IMR-90 (cell line): ENCODE measurements at regions of chr18 and their contacts with region 1.

Region 1: GRCh38 chr18:46849007-46849406 is 68.3 kb downstream of the PIAS2 start:
- DNase-seq: no peak
- ATAC-seq: no peak
- H3K4me3 ChIP-seq: no peak overlapping the region
- H3K27ac ChIP-seq: no peak overlapping the region
- H3K4me1 ChIP-seq: no peaks in the 10 kb centered on the region
- H3K27me3 ChIP-seq: no peaks in the 10 kb centered on the region
- CTCF ChIP-seq: no peak
- POLR2A ChIP-seq: no peak
- RAD21 ChIP-seq: no peak

Region 2: DNA sequence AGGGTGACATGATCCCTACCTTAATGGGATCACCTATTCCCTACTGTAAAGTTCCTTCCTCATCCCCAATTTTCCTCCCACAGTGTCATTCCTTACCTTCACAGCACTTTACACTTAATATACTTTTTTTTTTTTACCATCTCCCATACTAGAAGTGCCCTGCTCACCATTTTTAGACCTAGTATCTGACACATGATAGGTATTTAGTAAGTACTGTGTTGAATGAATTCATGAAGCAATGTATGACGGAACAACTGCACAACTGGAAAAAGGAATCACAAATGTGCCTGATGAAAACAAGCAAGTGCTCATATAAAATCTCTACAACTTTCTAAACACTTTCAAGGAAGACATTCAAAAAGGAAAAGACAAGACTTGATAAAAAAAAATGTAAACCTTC is 15.1 kb before region 1 on chr18:
- CTCF ChIA-PET with region 1: no interaction called
- POLR2A ChIA-PET with region 1: no interaction called
- dilution Hi-C with region 1: no loop called
- in situ Hi-C with region 1: no loop called
- intact Hi-C with region 1: loop called (anchors 2 kb)
- DNase-seq: no peak
- ATAC-seq: no peak
- H3K4me3 ChIP-seq: no peak overlapping the region
- H3K27ac ChIP-seq: no peak overlapping the region
- H3K4me1 ChIP-seq: no peaks in the 10 kb centered on the region
- H3K27me3 ChIP-seq: no peaks in the 10 kb centered on the region
- CTCF ChIP-seq: no peak
- POLR2A ChIP-seq: no peak
- RAD21 ChIP-seq: no peak